Activated CD4-positive, alpha-beta memory T cell treated with anti-CD3 and anti-CD28 coated beads for 36 hours (primary cell): ENCODE measurements at regions of chr18 and their contacts with region 1.

Region 1: GRCh38 chr18:596288-596881 is 403 bp upstream of the CLUL1 start:
- DNase-seq: no peak
- H3K4me3 Mint-ChIP-seq: no peak overlapping the region
- H3K27ac Mint-ChIP-seq: no peak overlapping the region
- H3K4me1 Mint-ChIP-seq: peaks cover 5% of the 10 kb centered on the region
- H3K27me3 Mint-ChIP-seq: peaks cover 18% of the 10 kb centered on the region

Region 2: DNA sequence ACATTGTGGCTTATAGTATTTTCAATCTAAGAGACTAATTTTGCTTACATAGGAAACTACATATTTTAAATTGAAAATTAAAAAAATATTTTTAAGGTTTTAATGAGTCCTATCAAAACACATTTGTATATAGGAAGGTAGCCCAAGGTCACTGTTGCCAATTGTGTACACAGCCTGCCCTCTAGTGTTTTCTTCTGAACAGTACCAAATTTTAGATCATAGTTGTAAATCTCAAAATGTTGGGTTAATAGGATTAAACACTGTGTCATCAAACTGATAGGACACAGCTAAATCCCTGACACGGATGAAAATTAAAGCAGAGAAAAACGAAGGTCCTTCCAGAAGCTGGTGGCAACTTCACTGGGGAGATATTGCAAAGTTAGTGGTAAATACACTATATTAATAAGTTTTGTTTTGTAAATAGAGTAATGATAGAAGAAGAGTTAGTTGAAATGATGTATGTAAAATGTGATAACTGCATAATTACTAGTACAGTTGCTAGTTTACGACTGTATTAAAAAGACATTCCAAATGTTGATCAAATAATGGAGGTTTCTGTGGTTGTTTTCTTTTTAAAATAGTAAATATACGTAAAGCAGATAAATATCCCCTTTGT is 20.1 kb after region 1 on chr18:
- CTCF ChIA-PET with region 1: interaction called, 4 read pairs
- POLR2A ChIA-PET with region 1: no interaction called
- intact Hi-C with region 1: loop called (anchors 1 kb)
- DNase-seq: no peak
- H3K4me3 Mint-ChIP-seq: no peak overlapping the region
- H3K27ac Mint-ChIP-seq: no peak overlapping the region
- H3K4me1 Mint-ChIP-seq: no peaks in the 10 kb centered on the region
- H3K27me3 Mint-ChIP-seq: peaks cover 2% of the 10 kb centered on the region

Region 3: DNA sequence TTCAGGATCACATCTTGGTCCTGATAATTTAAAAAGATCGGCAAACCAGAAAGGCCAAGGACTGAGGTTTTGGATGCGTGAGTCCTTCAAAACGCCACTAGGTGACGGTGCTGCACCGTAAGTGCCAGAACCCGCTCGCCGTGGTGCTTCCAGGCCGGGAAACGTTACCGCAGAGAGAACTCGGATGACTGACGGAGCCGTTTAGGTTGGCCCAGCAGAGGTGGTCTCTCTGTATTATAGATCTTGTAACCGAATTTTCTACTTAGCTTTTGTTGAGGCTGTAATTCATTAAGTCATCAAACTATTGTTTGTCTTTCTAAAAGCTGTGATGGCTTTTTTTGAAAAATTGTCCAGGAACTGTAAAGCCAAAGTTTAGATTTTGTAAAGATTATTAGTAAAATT is 268.5 kb after region 1 on chr18:
- CTCF ChIA-PET with region 1: no interaction called
- POLR2A ChIA-PET with region 1: no interaction called
- intact Hi-C with region 1: no loop called
- DNase-seq: peak; percentile 77
- H3K4me3 Mint-ChIP-seq: no peak overlapping the region
- H3K27ac Mint-ChIP-seq: no peak overlapping the region
- H3K4me1 Mint-ChIP-seq: peaks cover 4% of the 10 kb centered on the region
- H3K27me3 Mint-ChIP-seq: peaks cover 10% of the 10 kb centered on the region